Activated CD4-positive, alpha-beta memory T cell treated with anti-CD3 and anti-CD28 coated beads, Interleukin-2, amount 10 ng/mL, durations not matched to agents 7 days and 5 days (primary cell): ENCODE measurements at regions of chr6 and their contacts with region 1.

Region 1: DNA sequence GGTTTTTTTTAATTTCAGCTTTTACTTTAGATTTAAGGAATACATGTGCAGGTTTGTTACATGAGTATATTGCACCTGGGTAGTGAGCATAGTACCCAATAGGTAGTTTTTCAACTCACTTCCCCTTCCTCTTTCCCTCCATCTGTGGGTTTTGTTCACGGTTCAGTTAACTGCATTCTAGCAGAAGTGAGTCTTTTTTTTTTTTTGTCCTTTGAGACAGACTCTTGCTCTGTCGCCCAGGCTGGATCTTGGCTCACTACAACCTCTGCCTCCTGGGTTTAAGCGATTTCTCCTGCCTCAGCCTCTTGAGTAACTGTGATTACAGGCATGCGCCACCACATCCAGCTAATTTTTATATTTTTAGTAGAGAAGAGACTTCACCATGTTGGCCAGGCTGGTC is 8.7 kb downstream of the UBR2 start:
- DNase-seq: no peak
- H3K4me3 Mint-ChIP-seq: no peak overlapping the region
- H3K27ac Mint-ChIP-seq: peak overlapping the region; percentile 36
- H3K4me1 Mint-ChIP-seq: peaks cover 45% of the 10 kb centered on the region
- H3K27me3 Mint-ChIP-seq: no peaks in the 10 kb centered on the region

Region 2: DNA sequence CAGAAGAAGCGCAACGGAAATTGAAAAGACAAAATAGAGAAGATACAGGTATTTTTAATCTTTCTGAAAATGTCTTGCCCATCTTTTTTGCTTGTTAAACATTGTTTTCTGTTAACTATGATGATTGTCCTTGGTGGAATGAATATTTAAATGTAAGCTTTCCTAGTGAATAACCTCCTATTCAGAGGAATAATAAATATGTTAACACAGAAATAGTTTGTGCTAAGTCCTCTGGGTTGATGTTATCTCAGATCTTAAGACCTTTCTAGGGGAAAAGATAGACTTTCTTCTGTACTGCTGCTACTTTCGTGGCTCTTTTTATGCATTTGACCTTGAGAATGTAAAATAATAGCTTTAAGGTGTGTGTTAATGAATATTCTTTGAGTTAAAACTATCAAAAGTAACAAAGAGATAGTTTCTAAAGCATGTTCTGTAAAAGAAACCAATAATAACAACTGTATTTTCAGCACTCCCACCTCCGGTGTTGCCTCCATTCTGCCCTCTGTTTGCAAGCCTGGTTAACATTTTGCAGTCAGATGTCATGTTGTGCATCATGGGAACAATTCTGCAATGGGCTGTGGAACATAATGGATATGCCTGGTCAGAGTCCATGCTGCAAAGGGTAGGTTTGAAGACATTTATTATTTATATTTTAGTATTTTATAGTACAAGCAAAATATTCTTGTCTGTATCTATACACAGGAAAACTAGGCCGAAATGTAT is 79.7 kb after region 1 on chr6:
- CTCF ChIA-PET with region 1: interaction called, 13 read pairs
- POLR2A ChIA-PET with region 1: no interaction called
- DNase-seq: no peak
- H3K4me3 Mint-ChIP-seq: no peak overlapping the region
- H3K27ac Mint-ChIP-seq: no peak overlapping the region
- H3K4me1 Mint-ChIP-seq: no peaks in the 10 kb centered on the region
- H3K27me3 Mint-ChIP-seq: no peaks in the 10 kb centered on the region

Region 3: DNA sequence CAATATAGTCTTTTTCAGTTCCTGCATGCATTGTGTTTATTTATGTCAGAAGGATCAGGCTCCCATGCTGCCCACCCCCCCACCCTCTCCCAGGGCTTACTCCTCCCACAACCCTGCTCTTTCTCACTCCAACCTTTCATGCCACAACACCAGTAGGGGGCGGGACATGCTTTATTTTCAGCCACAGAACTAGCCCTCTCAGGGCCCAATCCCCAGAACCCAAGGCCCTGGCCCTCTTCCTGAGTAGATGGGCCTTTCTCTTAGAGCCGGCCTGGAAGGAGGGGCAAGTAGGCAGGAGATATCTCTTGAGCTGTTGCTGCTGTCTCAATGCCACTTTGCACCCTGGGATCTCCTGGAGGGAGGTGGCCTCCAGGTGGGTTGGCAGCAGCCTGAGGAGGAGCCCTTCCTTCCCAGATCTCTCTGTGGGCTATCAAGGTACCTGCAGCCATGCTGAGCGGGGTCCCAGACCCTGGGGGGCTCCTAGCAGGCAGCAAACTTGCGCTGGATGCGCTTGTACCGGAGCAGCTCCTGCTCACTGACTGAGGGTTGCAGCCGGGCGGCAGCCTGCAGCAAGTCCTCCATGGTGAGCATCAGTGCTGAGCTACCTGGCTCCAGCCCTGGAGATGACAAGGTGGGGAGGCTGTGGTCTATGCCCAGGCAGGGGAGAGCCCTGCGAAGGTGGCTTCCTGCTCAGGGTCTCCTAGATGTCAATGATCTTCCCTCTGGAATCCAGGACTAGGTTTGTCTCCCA is 391.5 kb after region 1 on chr6:
- CTCF ChIA-PET with region 1: no interaction called
- POLR2A ChIA-PET with region 1: no interaction called
- DNase-seq: peak; percentile 52
- H3K4me3 Mint-ChIP-seq: no peak overlapping the region
- H3K27ac Mint-ChIP-seq: no peak overlapping the region
- H3K4me1 Mint-ChIP-seq: peaks cover 13% of the 10 kb centered on the region
- H3K27me3 Mint-ChIP-seq: peaks cover 3% of the 10 kb centered on the region